Activated B cell treated with CpG ODN at 0.5 μM for 24 hours (primary cell): ENCODE measurements at regions of chr17 and their contacts with region 1.

Region 1: DNA sequence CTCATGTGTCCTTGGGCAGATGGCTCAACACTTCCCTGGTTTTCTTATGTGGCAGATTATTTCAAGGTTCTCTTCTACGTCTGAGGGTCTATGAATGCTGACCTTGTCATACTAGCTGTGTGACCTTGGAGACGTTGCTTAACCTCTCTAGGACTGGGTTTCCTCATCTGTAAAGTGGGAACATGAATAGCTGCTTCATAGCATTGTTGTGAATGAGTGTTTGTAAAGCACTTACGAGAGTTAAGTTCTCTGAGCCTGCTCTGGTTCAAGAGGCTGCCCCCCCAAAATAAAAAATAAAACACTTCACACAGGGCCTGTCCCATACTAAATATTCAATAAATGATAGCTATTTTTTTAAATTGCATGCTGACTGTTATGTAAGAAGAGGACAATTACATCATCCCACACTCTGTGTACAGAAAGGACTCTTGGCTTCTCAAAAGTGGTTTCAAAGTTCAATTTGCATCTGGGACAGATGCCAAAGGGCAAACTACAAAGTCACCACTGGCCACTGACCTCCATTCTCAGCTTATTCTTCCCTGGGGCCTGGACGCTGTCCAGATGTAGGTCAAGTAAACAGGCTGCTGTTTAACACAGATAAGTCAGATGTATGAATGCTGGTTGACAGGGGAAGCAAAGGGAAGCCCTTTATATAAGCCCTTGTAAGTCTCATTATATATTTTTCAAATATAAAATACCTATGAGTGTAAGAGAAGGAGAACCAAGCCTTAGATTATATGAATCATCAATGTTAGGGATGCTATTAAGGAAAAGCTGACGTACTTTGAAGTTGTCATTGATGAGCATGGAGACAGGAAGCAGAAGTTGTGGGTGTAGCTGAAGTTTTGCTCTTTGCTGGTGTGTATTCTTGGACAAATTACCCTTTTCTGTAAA is 15.4 kb upstream of the NDEL1 start:
- DNase-seq: no peak
- ATAC-seq: no peak
- H3K4me3 Mint-ChIP-seq: no peak overlapping the region
- H3K27ac Mint-ChIP-seq: no peak overlapping the region
- H3K4me1 Mint-ChIP-seq: no peaks in the 10 kb centered on the region
- H3K27me3 Mint-ChIP-seq: peaks cover 41% of the 10 kb centered on the region
- CTCF ChIP-seq: no peak

Region 2: DNA sequence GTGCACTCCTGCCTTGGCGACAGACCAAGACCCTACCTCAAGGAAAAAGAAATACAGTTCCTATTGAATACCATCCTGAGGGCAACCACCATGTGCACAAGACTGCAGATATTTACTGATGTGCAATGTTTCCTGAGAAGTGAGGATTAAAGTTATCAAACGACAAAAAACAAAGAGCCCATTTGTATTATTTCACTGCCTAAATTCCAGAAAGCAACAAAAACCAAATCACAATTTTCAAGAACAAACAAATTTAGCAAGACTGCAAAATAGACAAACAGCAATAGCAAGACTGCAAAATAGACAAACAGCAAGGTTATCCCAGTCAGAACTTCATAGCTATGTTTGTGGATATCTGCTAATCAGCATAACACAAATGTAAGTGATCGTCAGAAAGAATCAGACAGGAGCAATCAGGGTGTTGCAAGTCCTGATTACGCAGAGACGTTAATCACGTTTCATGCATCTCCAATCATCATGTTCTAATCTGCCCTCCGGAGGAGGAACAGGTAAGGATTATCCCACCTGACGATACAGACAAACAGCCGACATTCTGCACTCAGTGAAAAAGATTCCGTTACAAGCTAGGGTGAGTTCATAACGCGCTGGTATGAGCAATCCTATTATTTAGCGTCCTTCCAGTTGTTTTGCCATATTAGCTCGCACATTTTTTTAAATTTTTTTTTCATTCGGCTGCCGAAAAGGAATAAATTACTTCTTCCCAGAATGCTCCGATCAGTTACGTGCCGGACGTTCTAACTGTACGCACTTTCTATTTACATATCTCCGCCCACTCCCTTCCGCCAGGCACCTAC is 247.0 kb before region 1 on chr17:
- CTCF ChIA-PET with region 1: no interaction called
- POLR2A ChIA-PET with region 1: no interaction called
- intact Hi-C with region 1: no loop called
- DNase-seq: peak; percentile 40
- ATAC-seq: peak; percentile 76
- H3K4me3 Mint-ChIP-seq: peak overlapping the region; percentile 84
- H3K27ac Mint-ChIP-seq: peak overlapping the region; percentile 100
- H3K4me1 Mint-ChIP-seq: peaks cover 44% of the 10 kb centered on the region
- H3K27me3 Mint-ChIP-seq: no peaks in the 10 kb centered on the region
- CTCF ChIP-seq: no peak

Region 3: GRCh38 chr17:8466456-8466855 is 46.2 kb after region 1 on chr17:
- CTCF ChIA-PET with region 1: no interaction called
- POLR2A ChIA-PET with region 1: no interaction called
- intact Hi-C with region 1: loop called (anchors 1 kb)
- DNase-seq: no peak
- ATAC-seq: no peak
- H3K4me3 Mint-ChIP-seq: no peak overlapping the region
- H3K27ac Mint-ChIP-seq: no peak overlapping the region
- H3K4me1 Mint-ChIP-seq: no peaks in the 10 kb centered on the region
- H3K27me3 Mint-ChIP-seq: no peaks in the 10 kb centered on the region
- CTCF ChIP-seq: no peak